Caco-2 (cell line): ENCODE measurements at regions of chr4 and their contacts with region 1.

Region 1: DNA sequence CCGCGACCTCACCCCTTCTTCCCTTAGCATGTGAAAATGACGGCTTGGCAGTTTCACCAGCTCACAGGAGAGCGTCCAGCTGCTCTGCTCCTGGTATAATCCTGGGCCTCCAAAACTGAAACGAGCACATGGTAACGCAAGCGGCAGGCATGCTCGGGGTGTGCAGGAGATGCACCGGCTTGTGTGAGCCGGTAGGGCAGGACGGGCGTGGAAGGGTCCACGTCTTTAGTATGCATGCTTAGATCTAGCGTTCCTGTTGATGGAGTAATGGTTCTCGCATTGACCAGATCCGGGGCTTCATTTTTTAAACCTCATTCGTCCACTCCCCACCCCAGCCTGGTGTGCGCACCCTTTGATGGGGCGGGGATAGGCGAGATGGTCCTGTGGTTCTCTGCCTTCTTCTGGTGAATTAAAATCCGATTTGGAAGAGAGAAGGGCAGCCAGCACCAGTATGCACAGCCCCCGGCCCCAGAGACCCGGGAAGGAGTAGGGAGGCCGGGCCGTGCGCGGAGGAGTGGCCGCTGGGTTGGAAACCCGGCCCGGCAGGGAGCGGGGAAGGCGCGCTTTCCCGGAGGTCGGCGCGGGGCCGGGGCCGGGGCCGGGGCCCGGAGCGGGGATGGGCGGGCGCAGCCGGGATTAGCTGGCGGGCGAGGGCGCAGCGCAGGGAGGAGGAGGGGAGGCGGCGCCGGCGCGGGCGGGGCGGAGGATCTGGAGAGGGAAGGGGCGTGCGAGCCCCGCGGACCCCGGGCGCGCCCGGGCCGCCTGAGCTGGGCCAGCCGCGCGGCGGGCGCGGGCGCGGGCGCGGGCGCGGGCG is 39.8 kb downstream of the FAM149A start:
- DNase-seq: peak; percentile 48 to 60
- H3K4me3 ChIP-seq: peak overlapping the region; percentile 38
- H3K4me3 Mint-ChIP-seq: peak overlapping the region; percentile 73
- H3K27ac Mint-ChIP-seq: no peak overlapping the region
- H3K4me1 ChIP-seq: 0 out of 2 replicates have a peak, but pooled peaks cover 4% of the 10 kb centered on the region
- H3K4me1 Mint-ChIP-seq: peaks cover 7% of the 10 kb centered on the region
- H3K27me3 ChIP-seq: no peaks in the 10 kb centered on the region
- H3K27me3 Mint-ChIP-seq: peaks cover 6% of the 10 kb centered on the region
- CTCF ChIP-seq: no peak

Region 2: DNA sequence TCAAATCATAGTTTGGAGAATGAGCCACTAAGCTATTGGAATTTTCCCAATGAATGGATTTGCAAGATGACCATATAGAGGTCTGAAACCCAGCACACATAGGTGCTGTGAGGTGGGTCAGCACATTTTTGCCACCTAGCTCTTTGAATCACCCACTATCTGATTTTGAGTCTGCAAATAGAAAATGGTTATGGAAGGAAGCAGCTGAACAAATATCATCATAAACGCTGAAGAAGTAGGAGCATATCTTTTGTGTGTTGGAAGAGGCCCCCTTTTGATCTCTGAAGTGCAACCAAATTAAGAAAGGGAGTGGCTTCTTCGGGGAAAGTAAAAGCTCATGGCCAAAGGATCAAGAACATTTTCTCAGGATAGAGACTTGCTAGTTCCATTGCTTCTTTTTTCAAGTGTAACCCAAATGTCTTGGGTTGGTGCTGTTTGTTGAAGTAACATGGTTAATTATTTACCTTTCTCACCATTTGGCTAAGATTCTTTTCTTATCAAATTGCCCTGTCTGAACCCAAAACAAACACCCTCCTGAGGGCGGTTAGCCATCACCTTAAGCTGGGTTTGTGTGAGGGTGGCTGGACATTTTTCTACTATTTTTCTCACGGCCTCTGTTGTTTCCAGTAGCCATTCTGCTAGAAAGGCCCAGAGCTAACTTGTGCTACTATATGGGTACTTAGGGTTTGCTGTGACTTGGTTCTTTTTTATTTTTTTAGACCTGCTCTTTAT is 313.9 kb before region 1 on chr4:
- CTCF ChIA-PET with region 1: no interaction called
- POLR2A ChIA-PET with region 1: no interaction called
- intact Hi-C with region 1: no loop called
- DNase-seq: peak; percentile 65 to 71
- H3K4me3 ChIP-seq: no peak overlapping the region
- H3K4me3 Mint-ChIP-seq: peak overlapping the region; percentile 36
- H3K27ac Mint-ChIP-seq: peak overlapping the region; percentile 65
- H3K4me1 ChIP-seq: peaks cover 53% of the 10 kb centered on the region
- H3K4me1 Mint-ChIP-seq: peaks cover 32% of the 10 kb centered on the region
- H3K27me3 ChIP-seq: no peaks in the 10 kb centered on the region
- H3K27me3 Mint-ChIP-seq: no peaks in the 10 kb centered on the region
- CTCF ChIP-seq: no peak

Region 3: DNA sequence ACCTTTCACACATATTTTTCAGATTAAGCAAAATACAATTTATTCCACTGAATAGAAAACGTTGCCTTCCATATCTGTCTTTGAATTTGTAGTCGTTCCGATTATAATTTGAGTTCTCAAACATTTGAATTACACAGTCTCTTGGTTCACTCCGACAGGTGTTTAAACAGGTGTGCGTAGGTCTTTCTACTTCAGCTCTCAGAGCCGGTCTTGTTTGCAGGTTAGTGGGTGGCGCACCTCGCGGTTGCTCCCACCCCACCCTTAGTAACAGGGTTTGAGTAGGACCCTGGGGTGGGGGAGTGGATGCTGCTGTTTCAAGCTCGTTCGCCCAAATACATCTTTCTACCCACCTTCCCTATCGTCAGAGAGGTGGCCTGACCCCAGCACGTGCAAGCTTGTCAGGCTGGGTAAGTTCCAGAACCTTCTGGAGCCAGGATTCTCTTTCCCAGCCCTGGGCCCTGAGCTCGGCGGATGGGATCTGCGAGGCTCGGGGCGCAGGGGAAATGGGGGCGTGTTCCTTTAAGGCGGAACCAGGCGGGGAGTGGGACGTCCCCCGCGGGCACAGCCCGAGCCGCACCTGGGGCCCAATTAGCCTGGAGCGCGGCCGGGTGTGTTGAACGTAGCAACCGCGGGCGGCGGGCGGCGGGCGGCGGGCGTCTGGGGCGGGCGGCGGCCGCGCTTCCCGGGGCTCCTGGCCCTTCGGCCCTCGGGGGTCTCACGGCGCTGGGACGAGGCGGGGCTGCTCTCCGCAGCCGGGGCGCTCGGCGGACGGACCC is 40.0 kb before region 1 on chr4 and contains the start of gene FAM149A:
- CTCF ChIA-PET with region 1: no interaction called
- POLR2A ChIA-PET with region 1: no interaction called
- intact Hi-C with region 1: loop called (anchors 2 kb)
- DNase-seq: peak; percentile 69 to 79
- H3K4me3 ChIP-seq: peak within 1 kb of the TSS; percentile 67
- H3K4me3 Mint-ChIP-seq: peak within 1 kb of the TSS; percentile 60
- H3K27ac Mint-ChIP-seq: peak within 1 kb of the TSS; percentile 82
- H3K4me1 ChIP-seq: 0 out of 2 replicates have a peak, but pooled peaks cover 4% of the 10 kb centered on the region
- H3K4me1 Mint-ChIP-seq: no peaks in the 10 kb centered on the region
- H3K27me3 ChIP-seq: no peaks in the 10 kb centered on the region
- H3K27me3 Mint-ChIP-seq: no peaks in the 10 kb centered on the region
- CTCF ChIP-seq: no peak
- total RNA-seq, gene FAM149A: 5.1 and 6.6 TPM in 2 replicates

Region 4: DNA sequence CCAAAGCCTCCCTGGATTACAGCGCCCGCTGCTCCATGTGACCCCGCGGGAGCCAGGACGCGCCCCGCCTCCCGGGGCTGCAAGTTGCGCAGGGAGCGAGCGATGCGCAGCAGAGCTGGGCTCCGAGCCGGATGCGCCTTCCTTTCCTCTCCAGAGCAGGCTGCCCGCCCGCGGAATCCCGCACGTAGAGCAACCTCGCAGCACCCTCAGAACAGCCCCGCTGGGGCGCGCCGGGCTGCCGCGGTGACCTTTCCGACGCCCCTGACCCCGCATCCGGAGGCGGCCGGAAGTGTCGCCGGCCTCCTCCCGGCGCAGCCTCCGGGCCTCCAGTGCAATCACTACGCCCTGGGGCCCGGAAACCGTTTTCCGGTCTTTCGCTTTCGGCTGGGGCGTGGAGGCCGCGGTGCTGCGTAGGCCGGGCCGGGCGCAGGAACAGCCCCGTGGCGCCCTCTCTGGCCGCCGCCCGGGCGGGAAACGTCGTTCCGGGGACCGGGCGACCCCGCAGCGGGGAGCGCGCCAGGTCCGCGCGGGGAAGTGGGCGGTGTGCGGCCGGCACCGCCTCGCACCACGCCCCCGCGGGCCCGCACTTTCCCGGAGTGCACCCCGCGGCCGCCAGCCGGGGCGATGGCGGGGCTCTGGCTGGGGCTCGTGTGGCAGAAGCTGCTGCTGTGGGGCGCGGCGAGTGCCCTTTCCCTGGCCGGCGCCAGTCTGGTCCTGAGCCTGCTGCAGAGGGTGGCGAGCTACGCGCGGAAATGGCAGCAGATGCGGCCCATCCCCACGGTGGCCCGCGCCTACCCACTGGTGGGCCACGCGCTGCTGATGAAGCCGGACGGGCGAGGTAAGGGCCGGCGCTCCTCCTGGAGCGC is 47.1 kb after region 1 on chr4 and contains the start of gene CYP4V2:
- CTCF ChIA-PET with region 1: no interaction called
- POLR2A ChIA-PET with region 1: no interaction called
- intact Hi-C with region 1: loop called (anchors 5 kb)
- DNase-seq: peak; percentile 67 to 74
- H3K4me3 ChIP-seq: peak within 1 kb of the TSS; percentile 70
- H3K4me3 Mint-ChIP-seq: peak within 1 kb of the TSS; percentile 80
- H3K27ac Mint-ChIP-seq: no peak within 1 kb of the TSS
- H3K4me1 ChIP-seq: peaks cover 10% of the 10 kb centered on the region; the same call in 1 of the 2 replicates
- H3K4me1 Mint-ChIP-seq: no peaks in the 10 kb centered on the region
- H3K27me3 ChIP-seq: no peaks in the 10 kb centered on the region; the same call in none of the 2 replicates
- H3K27me3 Mint-ChIP-seq: peaks cover 10% of the 10 kb centered on the region
- CTCF ChIP-seq: peak; percentile 16 to 28
- total RNA-seq, gene CYP4V2: 2.1 and 2.7 TPM in 2 replicates

Region 5: DNA sequence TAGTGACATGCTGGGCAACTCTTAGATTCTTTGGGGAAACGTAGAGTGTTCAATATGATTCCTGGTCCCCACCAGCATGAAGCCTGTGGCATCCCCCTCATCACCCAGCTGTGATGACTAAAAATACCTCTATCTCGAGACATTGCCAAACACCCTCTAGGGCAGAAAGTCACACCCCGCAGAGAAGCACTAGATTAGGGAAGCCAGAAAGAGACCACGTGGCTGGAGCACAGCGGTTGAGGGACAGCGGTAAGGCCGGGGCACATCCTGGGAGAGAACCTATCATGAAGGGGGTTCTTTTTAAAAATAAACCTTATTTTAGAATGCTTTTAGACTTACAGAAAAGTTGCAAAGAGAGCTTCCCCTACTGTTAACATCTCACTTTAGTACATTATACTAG is 568.3 kb after region 1 on chr4:
- CTCF ChIA-PET with region 1: no interaction called
- POLR2A ChIA-PET with region 1: no interaction called
- intact Hi-C with region 1: no loop called
- DNase-seq: no peak
- H3K4me3 ChIP-seq: no peak overlapping the region
- H3K4me3 Mint-ChIP-seq: no peak overlapping the region
- H3K27ac Mint-ChIP-seq: no peak overlapping the region
- H3K4me1 ChIP-seq: peaks cover 10% of the 10 kb centered on the region; the same call in 1 of the 2 replicates
- H3K4me1 Mint-ChIP-seq: peaks cover 14% of the 10 kb centered on the region
- H3K27me3 ChIP-seq: no peaks in the 10 kb centered on the region
- H3K27me3 Mint-ChIP-seq: no peaks in the 10 kb centered on the region
- CTCF ChIP-seq: no peak